ENCODE measurements at regions of chr2 and their contacts with region 1.

Region 1: DNA sequence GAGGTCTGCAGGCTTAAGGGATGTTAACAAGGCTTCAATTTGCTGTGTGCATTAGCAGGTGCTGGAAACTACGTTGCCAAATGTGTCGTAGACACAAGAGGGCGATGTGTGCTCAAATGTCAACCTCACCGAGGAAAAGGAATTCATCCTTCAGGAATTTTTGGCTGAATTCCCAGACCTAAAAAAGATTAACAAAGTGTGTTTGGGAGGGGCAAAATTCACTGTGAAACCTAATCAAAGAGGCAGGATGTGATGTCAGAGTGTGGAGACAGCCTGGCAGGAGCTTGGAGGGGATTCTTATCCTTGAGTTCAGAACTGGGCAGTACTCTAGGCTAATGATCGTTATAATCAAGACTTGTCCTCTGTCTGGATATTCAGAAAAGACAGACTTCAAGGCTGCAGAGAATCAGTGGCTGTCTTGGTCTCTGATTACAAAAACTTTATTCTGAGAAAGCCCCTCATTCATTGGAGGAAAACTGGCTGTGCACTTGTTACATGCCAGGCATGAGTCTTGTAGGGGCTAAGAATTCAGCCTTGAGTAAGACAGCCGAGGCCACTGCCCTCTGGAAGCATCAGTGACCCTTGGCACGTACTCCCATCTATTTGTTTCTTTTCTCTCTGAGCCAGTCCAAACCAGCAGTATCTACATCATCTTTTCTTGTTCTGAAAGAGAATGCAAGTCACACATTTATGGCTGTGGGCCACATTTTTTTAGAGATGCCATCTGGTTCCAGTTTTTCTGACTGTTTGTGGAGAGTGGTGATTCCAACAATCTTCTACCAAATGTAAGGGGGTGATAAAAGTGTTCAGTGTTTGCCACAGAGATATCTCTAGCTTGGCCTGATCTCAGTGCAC is 18.7 kb upstream of the SCYGR1 start:
- ATAC-seq: peak; percentile 63 to 96 (median 90)
- H3K4me3 ChIP-seq: no peak overlapping the region
- H3K27ac ChIP-seq: no peak overlapping the region
- H3K4me1 ChIP-seq: peaks cover 7 to 8% of the 10 kb centered on the region in 2 donors

Region 2: DNA sequence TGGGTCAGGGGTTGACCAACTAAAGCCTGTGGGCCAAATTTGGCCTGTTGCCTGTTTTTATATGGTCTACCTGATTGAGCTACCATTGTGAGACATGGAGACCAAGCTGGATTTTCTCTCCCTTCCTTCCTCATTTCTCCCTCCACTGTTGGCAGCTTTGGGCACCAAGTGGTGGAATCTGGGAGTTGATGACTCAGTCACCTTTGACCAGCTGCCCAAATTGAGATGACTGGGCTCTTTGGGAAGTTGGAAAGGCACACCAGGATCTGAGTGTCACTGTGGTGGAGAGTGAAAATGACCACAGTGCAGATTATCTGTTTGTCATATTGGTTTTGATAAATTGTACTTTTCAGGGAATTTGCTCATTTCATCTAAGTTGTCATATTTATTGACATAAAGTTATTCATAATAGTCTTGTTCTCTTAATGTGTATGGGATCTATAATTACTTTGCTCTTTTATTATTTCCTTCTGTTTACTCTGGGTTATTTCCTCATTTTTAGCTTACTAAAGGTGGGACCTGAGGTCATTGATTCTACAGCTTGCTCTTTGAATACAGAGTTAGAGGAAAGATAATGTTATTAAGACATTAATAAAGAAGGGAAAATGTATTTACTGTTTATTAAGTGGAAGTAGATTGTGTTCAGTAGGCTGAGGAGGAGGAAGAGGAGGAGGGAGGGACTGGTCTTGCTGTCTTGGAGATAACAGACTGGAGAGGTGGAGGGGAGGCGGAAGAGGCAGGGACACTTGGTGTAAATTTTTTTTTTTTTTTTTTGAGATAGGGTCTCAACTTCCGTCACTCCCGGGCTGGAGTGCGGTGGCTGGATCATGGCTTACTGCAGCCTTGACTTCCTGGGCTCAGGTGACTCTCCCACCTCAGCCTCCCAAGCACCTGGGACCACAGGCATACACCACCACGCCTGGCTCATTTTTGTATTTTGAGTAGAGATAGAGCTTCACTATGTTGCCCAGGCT is 97.3 kb after region 1 on chr2:
- in situ Hi-C with region 1: no loop called
- ATAC-seq: no peak
- H3K4me3 ChIP-seq: no peak overlapping the region
- H3K27ac ChIP-seq: no peak overlapping the region
- H3K4me1 ChIP-seq: peaks cover 0 to 4% of the 10 kb centered on the region in 2 donors

Region 3: DNA sequence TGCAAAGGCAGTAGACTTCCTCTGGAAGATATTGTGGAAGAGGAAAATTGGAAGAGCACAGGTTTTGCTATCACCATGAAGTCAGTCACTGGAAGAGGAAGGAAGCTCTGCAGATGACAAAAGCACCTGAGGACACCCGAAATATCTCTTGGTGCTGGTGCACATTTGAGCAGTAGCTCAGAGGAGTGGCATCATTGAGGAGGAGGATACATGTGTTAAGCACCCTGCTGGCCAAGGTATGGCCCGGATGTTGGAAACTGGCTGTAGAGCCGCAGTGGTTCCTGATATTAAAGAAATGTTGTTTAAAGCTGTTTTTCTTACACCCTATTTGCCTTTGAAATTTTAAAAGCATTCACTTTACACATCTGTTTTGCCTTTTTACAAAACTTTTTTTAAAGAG is 159.6 kb after region 1 on chr2:
- in situ Hi-C with region 1: no loop called
- ATAC-seq: no peak
- H3K4me3 ChIP-seq: no peak overlapping the region
- H3K27ac ChIP-seq: no peak overlapping the region
- H3K4me1 ChIP-seq: no peaks in the 10 kb centered on the region

Region 4: DNA sequence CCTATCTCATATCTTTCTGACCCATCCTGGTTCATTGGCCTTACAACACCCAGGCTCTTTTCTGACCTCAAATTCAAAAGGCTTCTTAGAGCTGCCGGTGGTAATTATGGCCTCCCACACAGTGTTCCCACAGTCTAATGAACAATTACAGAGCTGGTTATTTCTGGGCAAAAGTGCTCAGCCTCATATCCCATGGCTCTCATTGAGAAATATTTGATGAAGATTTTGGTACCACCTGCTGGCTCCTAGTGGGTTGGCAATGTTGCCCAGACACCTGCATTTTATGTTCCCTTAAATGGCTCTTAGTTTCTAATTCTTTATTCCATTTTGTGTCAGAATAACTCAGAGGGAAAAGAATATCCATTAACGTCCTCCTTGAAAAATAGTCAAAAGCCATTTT is 172.2 kb after region 1 on chr2:
- in situ Hi-C with region 1: no loop called
- ATAC-seq: no peak
- H3K4me3 ChIP-seq: no peak overlapping the region
- H3K27ac ChIP-seq: no peak overlapping the region
- H3K4me1 ChIP-seq: no peaks in the 10 kb centered on the region

Region 5: DNA sequence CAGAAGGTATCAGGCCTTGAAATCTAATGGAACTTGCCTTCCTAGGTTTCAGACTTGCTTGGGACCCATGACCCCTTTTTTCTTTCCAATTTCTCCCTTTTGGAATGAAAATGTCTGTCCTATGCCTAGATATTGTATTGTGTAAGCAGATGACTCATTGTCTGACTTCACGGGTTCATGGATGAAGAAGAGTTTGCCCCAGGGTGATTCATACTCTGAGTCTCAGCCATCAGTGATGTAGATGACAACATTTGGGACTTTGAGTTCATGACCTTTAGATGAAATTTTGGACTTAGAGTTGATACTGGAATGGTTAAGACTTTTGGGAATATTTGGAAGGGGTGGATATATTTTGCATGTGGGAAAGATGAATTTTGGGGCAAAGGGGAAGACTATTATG is 249.1 kb after region 1 on chr2:
- in situ Hi-C with region 1: loop called in 1 of 9 experiments (anchors 10 kb)
- ATAC-seq: peak in 4 of 8 experiments; percentile 64 to 84 (median 75)
- H3K4me3 ChIP-seq: no peak overlapping the region
- H3K27ac ChIP-seq: no peak overlapping the region
- H3K4me1 ChIP-seq: peaks cover 0 to 8% of the 10 kb centered on the region in 2 donors

Measured in motor neuron (in vitro differentiated cells).